Aorta (tissue), 5 donors: ENCODE measurements at regions of chr4 and their contacts with region 1.

Region 1: GRCh38 chr4:71186566-71187403 is 152.0 kb upstream of the SLC4A4 start:
- DNase-seq: peak; percentile 58 to 86
- ATAC-seq: peak; percentile 94
- H3K4me3 ChIP-seq: peak overlapping the region; percentile 45 to 78
- H3K27ac ChIP-seq: peak overlapping the region in 1 of 2 donors; percentile 59
- H3K4me1 ChIP-seq: no peaks in the 10 kb centered on the region
- H3K27me3 ChIP-seq: no peaks in the 10 kb centered on the region

Region 2: DNA sequence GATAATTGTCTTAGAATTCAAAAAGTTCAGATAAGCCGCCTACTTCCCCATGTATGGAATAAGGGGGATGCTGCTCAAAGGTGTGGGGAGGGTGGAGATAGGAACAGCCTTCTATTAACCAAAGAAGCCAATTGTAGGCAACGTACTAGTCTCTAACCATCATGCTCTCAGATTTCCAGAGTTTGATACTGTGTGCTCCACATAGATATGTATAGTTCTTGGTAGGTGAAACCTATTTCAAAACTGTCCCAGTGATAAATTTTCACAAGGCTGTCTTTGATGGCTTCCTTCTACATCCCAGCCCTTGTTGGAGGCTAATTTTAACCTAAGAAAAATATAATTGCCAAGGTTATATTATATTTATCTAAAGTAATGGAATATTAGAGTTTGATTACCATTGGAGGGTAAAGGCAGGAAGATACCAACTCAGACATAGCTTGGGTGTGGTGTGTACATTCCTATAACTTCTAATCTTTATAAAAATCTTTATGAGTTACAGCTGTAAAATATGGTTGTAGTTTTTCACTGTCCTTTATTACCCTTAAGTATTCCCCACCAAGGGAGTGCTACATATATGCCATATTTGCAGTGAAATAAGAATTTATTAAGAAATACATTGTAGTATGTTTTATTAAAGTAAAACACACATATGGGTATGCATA is 239.7 kb after region 1 on chr4:
- intact Hi-C with region 1: no loop called
- DNase-seq: no peak
- ATAC-seq: no peak
- H3K4me3 ChIP-seq: no peak overlapping the region
- H3K27ac ChIP-seq: no peak overlapping the region
- H3K4me1 ChIP-seq: no peaks in the 10 kb centered on the region
- H3K27me3 ChIP-seq: no peaks in the 10 kb centered on the region

Region 3: GRCh38 chr4:71553605-71554004 is 366.8 kb after region 1 on chr4:
- intact Hi-C with region 1: loop called in 1 of 2 experiments (anchors 5 kb)
- DNase-seq: no peak
- ATAC-seq: no peak
- H3K4me3 ChIP-seq: no peak overlapping the region
- H3K27ac ChIP-seq: no peak overlapping the region
- H3K4me1 ChIP-seq: no peaks in the 10 kb centered on the region
- H3K27me3 ChIP-seq: no peaks in the 10 kb centered on the region

Region 4: DNA sequence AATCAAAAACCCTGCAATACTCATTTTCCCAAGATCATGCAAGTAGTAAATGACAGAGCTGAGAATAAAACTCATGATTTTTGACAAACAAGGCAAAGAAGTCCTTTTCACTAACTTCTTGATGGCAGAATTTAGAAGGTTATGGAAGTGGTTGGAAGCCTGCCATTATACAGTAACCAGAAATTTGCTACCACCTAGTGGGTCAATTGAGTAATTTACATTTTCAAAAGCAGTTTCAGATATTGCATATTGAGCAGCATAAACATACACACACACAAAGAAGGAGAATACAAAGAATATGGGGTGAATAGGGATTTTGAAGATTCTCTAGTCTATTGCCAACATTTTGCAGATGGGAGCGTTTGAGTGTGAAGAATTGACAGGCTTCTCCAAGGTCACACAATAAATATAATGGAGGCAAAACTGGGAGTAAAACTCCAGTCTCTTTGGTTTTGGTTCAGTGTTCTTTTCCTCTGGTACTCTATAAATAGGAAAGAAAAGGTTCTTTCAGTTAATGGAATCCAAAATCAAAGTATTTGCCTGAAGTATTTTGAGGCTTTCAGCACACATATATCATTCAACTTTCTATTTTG is 526.9 kb after region 1 on chr4:
- intact Hi-C with region 1: loop called (anchors 5 kb)
- DNase-seq: no peak
- ATAC-seq: peak; percentile 65
- H3K4me3 ChIP-seq: no peak overlapping the region
- H3K27ac ChIP-seq: no peak overlapping the region
- H3K4me1 ChIP-seq: no peaks in the 10 kb centered on the region
- H3K27me3 ChIP-seq: no peaks in the 10 kb centered on the region